ENCODE measurements at regions of chr3 and their contacts with region 1.

Region 1: GRCh38 chr3:120773932-120774331 is 31.4 kb downstream of the GTF2E1 start:
- DNase-seq: peak; percentile 73
- H3K4me3 Mint-ChIP-seq: no peak overlapping the region
- H3K27ac Mint-ChIP-seq: no peak overlapping the region
- H3K4me1 Mint-ChIP-seq: peaks cover 10% of the 10 kb centered on the region
- H3K27me3 Mint-ChIP-seq: no peaks in the 10 kb centered on the region

Region 2: DNA sequence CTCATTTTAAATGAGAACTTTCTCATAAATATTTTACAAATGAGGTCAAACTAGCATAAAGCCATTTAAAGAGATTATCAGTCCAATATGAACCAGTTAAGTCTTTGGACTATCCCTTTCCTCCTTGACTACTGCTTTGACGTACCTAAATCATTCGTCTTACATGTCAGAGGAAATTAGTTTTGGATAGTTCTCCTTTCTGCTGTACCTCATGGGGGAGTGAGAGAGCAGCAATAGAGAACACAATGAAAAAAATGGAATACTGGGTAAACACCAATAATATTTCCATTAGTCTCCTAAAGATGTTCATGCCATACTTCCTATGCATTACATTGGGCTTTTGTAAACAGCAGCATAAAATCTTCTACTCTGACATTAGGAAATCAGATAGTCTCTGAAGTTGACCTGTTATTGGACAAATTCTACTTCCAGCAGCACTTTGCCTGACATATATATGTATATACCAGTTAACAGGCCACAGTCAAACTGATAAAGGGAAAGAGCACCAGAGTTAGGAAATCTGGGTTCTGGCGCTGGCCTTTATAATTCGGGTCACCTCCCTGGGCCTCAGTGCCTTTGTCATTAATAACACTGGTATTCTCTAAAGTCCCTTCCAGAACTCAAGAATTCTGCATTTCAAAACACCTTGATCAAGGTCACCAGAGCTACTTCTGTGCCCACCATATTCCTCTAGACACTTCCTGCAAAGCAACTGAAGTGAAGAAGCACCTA is 1248.8 kb before region 1 on chr3:
- intact Hi-C with region 1: no loop called
- DNase-seq: no peak
- H3K4me3 Mint-ChIP-seq: no peak overlapping the region
- H3K27ac Mint-ChIP-seq: no peak overlapping the region
- H3K4me1 Mint-ChIP-seq: peaks cover 15% of the 10 kb centered on the region
- H3K27me3 Mint-ChIP-seq: no peaks in the 10 kb centered on the region

Region 3: DNA sequence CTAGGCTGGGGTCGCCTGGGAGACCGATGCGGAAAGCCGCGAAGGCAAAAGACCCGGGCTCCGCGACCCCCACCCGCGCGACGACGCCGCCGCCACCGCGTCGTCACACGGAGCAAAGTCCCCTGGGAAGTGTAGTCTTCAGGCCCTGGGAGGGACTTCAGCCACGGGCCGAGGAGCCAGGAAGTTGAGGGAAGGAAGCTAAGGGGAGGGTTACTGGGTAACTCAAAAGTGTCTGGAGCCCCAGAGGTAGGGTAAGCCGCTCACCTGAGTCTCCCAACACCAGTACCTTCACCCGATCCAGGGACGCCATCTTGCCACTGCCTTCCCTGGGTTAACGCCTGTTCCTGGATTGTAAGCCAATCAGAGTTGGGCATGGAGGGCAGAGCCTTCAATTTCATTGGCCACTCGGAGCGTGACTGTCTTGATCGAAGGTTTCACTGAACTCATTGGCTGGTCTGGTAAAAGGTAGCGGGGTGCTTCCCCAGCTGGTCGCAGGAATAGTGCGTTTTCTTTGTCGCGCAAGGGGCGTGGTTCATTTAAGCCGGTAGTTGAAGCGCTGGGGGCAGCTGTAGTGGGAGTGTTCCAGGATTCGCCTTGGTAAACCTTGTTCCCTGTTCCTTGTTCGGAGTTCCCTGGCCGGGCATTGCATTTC is 31.6 kb before region 1 on chr3 and contains the starts of genes GTF2E1 and RABL3:
- intact Hi-C with region 1: loop called (anchors 2 kb)
- DNase-seq: peak; percentile 99
- H3K4me3 Mint-ChIP-seq: peak within 1 kb of the TSS; percentile 97
- H3K27ac Mint-ChIP-seq: peak within 1 kb of the TSS; percentile 98
- H3K4me1 Mint-ChIP-seq: peaks cover 25% of the 10 kb centered on the region
- H3K27me3 Mint-ChIP-seq: peaks cover 2% of the 10 kb centered on the region
- total RNA-seq, gene GTF2E1: 25.9 and 27.8 TPM in 2 replicates
- total RNA-seq, gene RABL3: 27.6 and 29.3 TPM in 2 replicates